ENCODE measurements at regions of chr15 and their contacts with region 1.

Region 1: DNA sequence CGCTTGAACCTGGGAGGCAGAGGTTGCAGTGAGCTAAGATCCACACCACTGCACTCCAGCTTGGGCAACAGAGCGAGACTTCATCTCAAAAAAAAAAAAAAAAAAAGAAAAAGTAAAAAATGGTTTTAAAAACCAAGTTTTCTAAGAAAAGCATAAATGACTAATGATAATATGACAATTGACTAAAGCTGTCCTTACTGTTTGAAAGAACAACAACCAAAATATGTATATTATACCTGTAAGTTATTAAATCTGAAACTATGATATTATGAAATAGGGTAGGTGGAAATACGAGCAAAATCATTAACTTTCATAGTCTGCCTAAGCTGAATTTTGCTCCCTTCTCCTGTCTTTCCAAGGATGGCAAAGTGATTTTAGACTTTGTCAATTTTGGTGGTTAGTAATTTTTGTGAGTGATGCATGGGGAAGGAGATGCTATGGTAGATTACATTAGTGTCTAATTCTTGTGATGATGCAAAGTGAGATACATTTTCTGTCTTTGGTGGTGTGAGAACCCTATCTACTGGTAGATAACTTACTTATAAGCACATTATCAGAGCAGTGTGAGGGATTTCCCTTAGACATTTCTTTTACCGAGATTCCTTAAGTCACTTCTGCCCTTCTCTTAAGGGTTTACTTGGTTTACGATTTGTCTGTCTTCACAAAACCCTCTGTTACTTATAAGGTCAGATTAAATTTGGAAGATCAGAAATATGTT is 10.6 kb upstream of the CHD2 start:
- DNase-seq: no peak

Region 2: DNA sequence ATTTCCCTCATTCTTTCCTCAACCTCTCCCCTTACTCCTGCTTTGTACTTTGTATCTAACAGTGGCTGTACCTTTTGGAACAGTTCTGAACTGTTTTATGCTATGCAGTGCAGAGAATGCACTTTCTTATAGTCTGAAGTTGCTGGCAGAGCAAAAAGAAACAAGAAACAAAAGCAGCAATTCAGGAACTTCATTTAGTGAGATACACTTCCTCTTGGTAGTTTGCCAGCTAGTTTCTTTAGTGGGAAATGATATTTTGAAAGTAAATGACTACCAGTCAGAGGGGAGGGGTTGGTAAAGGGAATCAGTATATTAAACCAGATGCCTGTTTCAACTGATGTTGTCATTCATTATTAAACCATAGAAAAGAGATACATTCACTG is 44.4 kb before region 1 on chr15:
- CTCF ChIA-PET with region 1: no interaction called
- POLR2A ChIA-PET with region 1: no interaction called
- DNase-seq: no peak

Region 3: GRCh38 chr15:92903941-92904831 is 14.6 kb after region 1 on chr15:
- CTCF ChIA-PET with region 1: interaction called, 3 read pairs
- POLR2A ChIA-PET with region 1: interaction called, 252 read pairs
- DNase-seq: peak; percentile 92